Naive thymus-derived CD4-positive, alpha-beta T cell (primary cell): ENCODE measurements at regions of chr21 and their contacts with region 1.

Region 1: DNA sequence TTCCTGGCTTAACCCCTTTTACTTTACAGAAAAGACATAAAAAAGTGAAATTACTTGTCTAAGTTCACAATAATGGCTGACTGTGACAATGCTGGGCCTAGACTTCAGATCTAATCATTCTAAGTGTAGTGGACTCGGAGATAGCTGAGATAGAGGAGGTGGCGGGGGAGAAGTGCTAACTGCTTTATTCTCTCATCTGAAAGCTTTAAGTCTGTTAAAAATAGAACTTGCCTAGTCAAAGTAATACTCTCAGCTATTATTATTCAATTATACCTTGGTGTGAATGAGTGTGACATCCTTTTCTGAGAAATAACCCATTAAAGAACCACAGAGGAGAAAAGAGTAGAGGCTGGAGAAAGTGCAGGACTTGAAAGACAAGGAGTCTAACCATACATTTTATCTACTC is 96.1 kb upstream of the OLIG2 start:
- DNase-seq: no peak
- ATAC-seq: no peak
- H3K4me3 ChIP-seq: no peak overlapping the region
- H3K4me3 Mint-ChIP-seq: peak overlapping the region in 2 of 10 donors; percentile 4 to 37
- H3K27ac ChIP-seq: no peak overlapping the region
- H3K27ac Mint-ChIP-seq: peak overlapping the region in 3 of 9 donors; percentile 21 to 41 (median 34)
- H3K4me1 ChIP-seq: peaks cover 33 to 44% of the 10 kb centered on the region in 2 donors
- H3K4me1 Mint-ChIP-seq: peaks cover 14 to 43% (median 28%) of the 10 kb centered on the region in 7 donors
- H3K27me3 ChIP-seq: no peaks in the 10 kb centered on the region
- H3K27me3 Mint-ChIP-seq: peaks cover 0 to 2% (median 0%) of the 10 kb centered on the region in 5 donors

Region 2: GRCh38 chr21:32412162-32413014 is 517.2 kb before region 1 on chr21 and contains the start of gene EVA1C:
- CTCF ChIA-PET with region 1: no interaction called
- POLR2A ChIA-PET with region 1: no interaction called
- intact Hi-C with region 1: loop called in 1 of 2 experiments (anchors 5 kb)
- DNase-seq: peak; percentile 56 to 73 (median 70)
- ATAC-seq: peak; percentile 81
- H3K4me3 ChIP-seq: peak within 1 kb of the TSS; percentile 76
- H3K4me3 Mint-ChIP-seq: peak within 1 kb of the TSS; percentile 88 to 97 (median 94)
- H3K27ac ChIP-seq: peak within 1 kb of the TSS; percentile 85
- H3K27ac Mint-ChIP-seq: peak within 1 kb of the TSS; percentile 89 to 95 (median 93)
- H3K4me1 ChIP-seq: peaks cover 14 to 29% of the 10 kb centered on the region in 2 donors
- H3K4me1 Mint-ChIP-seq: peaks cover 22 to 57% (median 28%) of the 10 kb centered on the region in 7 donors
- H3K27me3 ChIP-seq: no peaks in the 10 kb centered on the region
- H3K27me3 Mint-ChIP-seq: peaks cover 0 to 7% (median 0%) of the 10 kb centered on the region in 5 donors
- total RNA-seq, gene EVA1C: 2.6 to 16.3 (median 12.3) TPM

Region 3: DNA sequence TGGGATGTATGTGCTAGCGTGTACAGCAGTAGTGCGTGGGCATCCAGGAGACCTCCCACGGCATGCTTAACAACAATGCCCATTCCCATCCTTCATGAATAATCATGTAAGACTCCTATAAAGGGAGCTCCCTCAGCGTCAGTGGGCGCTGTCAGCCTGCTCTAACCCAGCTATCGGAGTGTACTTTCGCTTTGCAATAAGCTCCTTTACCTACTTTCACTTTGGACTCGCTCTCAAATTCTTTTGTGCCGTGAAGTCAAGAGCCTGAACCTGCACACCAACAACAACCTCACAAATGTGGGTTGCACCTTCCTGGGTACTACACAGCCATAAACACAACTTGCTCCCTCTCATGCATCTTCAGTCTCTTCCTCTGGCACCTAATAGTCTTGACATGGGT is 43.3 kb before region 1 on chr21:
- CTCF ChIA-PET with region 1: no interaction called
- POLR2A ChIA-PET with region 1: no interaction called
- intact Hi-C with region 1: loop called in 1 of 2 experiments (anchors 1 kb)
- DNase-seq: peak in 6 of 9 donors; percentile 4 to 47 (median 28)
- ATAC-seq: peak; percentile 72
- H3K4me3 ChIP-seq: peak overlapping the region; percentile 48
- H3K4me3 Mint-ChIP-seq: peak overlapping the region; percentile 38 to 87 (median 77)
- H3K27ac ChIP-seq: peak overlapping the region; percentile 42
- H3K27ac Mint-ChIP-seq: peak overlapping the region; percentile 65 to 94 (median 80)
- H3K4me1 ChIP-seq: peaks cover 0 to 6% of the 10 kb centered on the region in 2 donors
- H3K4me1 Mint-ChIP-seq: peaks cover 0 to 17% (median 15%) of the 10 kb centered on the region in 7 donors
- H3K27me3 ChIP-seq: no peaks in the 10 kb centered on the region
- H3K27me3 Mint-ChIP-seq: peaks cover 0 to 23% (median 6%) of the 10 kb centered on the region in 5 donors

Region 4: GRCh38 chr21:32916522-32917099 is 13.0 kb before region 1 on chr21:
- CTCF ChIA-PET with region 1: interaction called, 3 read pairs
- POLR2A ChIA-PET with region 1: interaction called, 3 read pairs
- intact Hi-C with region 1: loop called (anchors 1 kb)
- DNase-seq: no peak
- ATAC-seq: no peak
- H3K4me3 ChIP-seq: no peak overlapping the region
- H3K4me3 Mint-ChIP-seq: peak overlapping the region in 1 of 10 donors; percentile 52
- H3K27ac ChIP-seq: no peak overlapping the region
- H3K27ac Mint-ChIP-seq: peak overlapping the region in 8 of 9 donors; percentile 11 to 90 (median 76)
- H3K4me1 ChIP-seq: peaks cover 23 to 33% of the 10 kb centered on the region in 2 donors
- H3K4me1 Mint-ChIP-seq: peaks cover 18 to 49% (median 45%) of the 10 kb centered on the region in 7 donors
- H3K27me3 ChIP-seq: no peaks in the 10 kb centered on the region
- H3K27me3 Mint-ChIP-seq: peaks cover 0 to 7% (median 0%) of the 10 kb centered on the region in 5 donors

Region 5: GRCh38 chr21:32940079-32941014 is 10.7 kb after region 1 on chr21:
- CTCF ChIA-PET with region 1: interaction called, 9 read pairs
- POLR2A ChIA-PET with region 1: interaction called, 4 read pairs
- intact Hi-C with region 1: loop called in 1 of 2 experiments (anchors 1 kb)
- DNase-seq: peak in 8 of 9 donors; percentile 23 to 53 (median 40)
- ATAC-seq: peak; percentile 68
- H3K4me3 ChIP-seq: no peak overlapping the region
- H3K4me3 Mint-ChIP-seq: peak overlapping the region in 2 of 10 donors; percentile 28 to 45
- H3K27ac ChIP-seq: no peak overlapping the region
- H3K27ac Mint-ChIP-seq: no peak overlapping the region
- H3K4me1 ChIP-seq: no peaks in the 10 kb centered on the region
- H3K4me1 Mint-ChIP-seq: peaks cover 0 to 9% (median 6%) of the 10 kb centered on the region in 7 donors
- H3K27me3 ChIP-seq: no peaks in the 10 kb centered on the region
- H3K27me3 Mint-ChIP-seq: peaks cover 0 to 14% (median 0%) of the 10 kb centered on the region in 5 donors

Region 6: DNA sequence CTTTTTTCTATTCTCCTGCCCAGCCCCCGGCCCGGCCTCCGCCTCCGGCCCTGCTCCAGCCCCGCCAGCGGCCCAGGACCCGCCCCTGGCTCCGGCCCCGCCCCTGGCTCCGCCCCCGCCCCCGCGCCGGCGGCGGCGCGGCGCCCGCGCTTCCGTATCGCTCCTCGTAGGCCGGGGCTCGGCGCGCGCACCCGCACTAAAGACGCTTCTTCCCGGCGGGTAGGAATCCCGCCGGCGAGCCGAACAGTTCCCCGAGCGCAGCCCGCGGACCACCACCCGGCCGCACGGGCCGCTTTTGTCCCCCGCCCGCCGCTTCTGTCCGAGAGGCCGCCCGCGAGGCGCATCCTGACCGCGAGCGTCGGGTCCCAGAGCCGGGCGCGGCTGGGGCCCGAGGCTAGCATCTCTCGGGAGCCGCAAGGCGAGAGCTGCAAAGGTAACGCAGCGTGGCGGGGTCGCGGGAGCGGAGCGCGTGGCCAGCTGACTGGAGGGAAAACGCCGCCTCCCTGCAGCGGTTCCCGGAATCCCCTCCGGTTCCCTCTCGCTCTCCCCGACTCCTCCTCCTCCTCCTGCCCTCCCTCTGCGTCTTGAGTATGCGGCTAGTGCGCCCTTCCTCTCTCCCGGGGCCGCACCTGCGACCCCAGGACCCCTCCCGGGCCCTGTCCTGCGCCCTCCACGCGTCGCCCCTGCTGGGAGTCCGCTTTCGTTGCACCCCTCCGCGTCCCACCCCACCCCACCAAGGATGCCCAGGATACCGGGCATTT is 300.3 kb after region 1 on chr21 and contains the start of gene IFNAR2:
- CTCF ChIA-PET with region 1: no interaction called
- POLR2A ChIA-PET with region 1: no interaction called
- intact Hi-C with region 1: no loop called
- DNase-seq: peak; percentile 55 to 82 (median 68)
- ATAC-seq: peak; percentile 93
- H3K4me3 ChIP-seq: peak within 1 kb of the TSS; percentile 83
- H3K4me3 Mint-ChIP-seq: peak within 1 kb of the TSS; percentile 88 to 97 (median 92)
- H3K27ac ChIP-seq: peak within 1 kb of the TSS; percentile 92
- H3K27ac Mint-ChIP-seq: peak within 1 kb of the TSS; percentile 83 to 98 (median 90)
- H3K4me1 ChIP-seq: peaks cover 22 to 40% of the 10 kb centered on the region in 2 donors
- H3K4me1 Mint-ChIP-seq: peaks cover 35 to 59% (median 51%) of the 10 kb centered on the region in 7 donors
- H3K27me3 ChIP-seq: no peaks in the 10 kb centered on the region
- H3K27me3 Mint-ChIP-seq: no peaks in the 10 kb centered on the region
- total RNA-seq, gene IFNAR2: 44.9 to 85.8 (median 60.8) TPM

Region 7: DNA sequence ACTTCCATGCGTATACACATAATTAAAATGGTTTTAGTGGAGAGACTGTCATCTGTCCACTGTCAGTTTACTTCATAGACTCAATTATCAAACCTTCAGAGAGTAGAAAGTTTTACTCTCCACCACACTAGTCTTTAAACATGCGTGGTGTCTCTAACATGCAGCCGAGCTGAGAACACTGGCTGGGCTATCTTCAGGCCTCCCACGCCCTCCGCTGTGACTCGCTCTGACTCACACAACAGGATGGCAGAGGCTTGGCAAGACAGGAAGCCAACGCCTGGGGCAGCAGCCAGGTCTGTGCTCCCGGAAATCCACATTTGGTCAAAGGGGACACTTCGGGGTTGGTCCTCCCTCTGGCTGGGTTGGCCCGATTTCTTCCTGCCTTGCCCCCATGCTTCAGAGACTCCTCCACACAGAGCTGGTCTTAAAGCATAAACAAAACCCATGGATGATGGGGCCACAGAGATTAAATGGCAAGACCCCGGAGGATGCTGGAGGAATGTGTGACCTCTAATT is 450.9 kb after region 1 on chr21:
- CTCF ChIA-PET with region 1: no interaction called
- POLR2A ChIA-PET with region 1: no interaction called
- intact Hi-C with region 1: loop called in 1 of 2 experiments (anchors 5 kb)
- DNase-seq: peak; percentile 46 to 81 (median 63)
- ATAC-seq: peak; percentile 78
- H3K4me3 ChIP-seq: peak overlapping the region; percentile 0
- H3K4me3 Mint-ChIP-seq: peak overlapping the region; percentile 34 to 98 (median 66)
- H3K27ac ChIP-seq: peak overlapping the region; percentile 53
- H3K27ac Mint-ChIP-seq: peak overlapping the region; percentile 69 to 91 (median 87)
- H3K4me1 ChIP-seq: peaks cover 45 to 60% of the 10 kb centered on the region in 2 donors
- H3K4me1 Mint-ChIP-seq: peaks cover 48 to 70% (median 63%) of the 10 kb centered on the region in 7 donors
- H3K27me3 ChIP-seq: peaks cover 0 to 6% of the 10 kb centered on the region in 2 donors
- H3K27me3 Mint-ChIP-seq: peaks cover 0 to 40% (median 0%) of the 10 kb centered on the region in 5 donors